IMR-90 (cell line): ENCODE measurements at regions of chr7 and their contacts with region 1.

Region 1: GRCh38 chr7:10802526-10802925 is 171.1 kb upstream of the PHF14 start:
- DNase-seq: peak; percentile 13
- ATAC-seq: no peak
- H3K4me3 ChIP-seq: no peak overlapping the region
- H3K27ac ChIP-seq: no peak overlapping the region
- H3K4me1 ChIP-seq: no peaks in the 10 kb centered on the region
- H3K27me3 ChIP-seq: no peaks in the 10 kb centered on the region
- CTCF ChIP-seq: no peak
- POLR2A ChIP-seq: no peak
- RAD21 ChIP-seq: no peak

Region 2: DNA sequence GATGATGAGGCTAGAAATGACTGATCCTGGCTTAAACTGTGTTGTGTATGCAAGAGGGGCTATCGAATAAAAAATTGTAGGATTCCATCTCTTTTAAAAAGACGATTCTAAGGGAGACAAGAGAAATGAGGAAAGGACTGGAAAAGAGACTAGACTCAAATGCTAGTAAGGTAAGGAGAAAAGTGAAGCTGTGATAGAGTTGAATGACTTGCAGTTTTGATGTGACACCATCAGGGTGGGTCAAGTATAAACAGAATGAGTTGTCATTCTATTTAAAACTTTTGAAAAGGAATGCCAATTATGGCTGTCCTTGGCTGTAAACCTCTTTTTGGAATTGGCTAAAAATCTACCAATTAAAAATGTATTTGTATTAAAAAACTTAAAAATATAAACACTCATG is 13.4 kb before region 1 on chr7:
- CTCF ChIA-PET with region 1: no interaction called
- POLR2A ChIA-PET with region 1: no interaction called
- dilution Hi-C with region 1: no loop called
- in situ Hi-C with region 1: no loop called
- intact Hi-C with region 1: loop called (anchors 1 kb)
- DNase-seq: no peak
- ATAC-seq: no peak
- H3K4me3 ChIP-seq: no peak overlapping the region
- H3K27ac ChIP-seq: no peak overlapping the region
- H3K4me1 ChIP-seq: no peaks in the 10 kb centered on the region
- H3K27me3 ChIP-seq: no peaks in the 10 kb centered on the region
- CTCF ChIP-seq: no peak
- POLR2A ChIP-seq: no peak
- RAD21 ChIP-seq: no peak

Region 3: DNA sequence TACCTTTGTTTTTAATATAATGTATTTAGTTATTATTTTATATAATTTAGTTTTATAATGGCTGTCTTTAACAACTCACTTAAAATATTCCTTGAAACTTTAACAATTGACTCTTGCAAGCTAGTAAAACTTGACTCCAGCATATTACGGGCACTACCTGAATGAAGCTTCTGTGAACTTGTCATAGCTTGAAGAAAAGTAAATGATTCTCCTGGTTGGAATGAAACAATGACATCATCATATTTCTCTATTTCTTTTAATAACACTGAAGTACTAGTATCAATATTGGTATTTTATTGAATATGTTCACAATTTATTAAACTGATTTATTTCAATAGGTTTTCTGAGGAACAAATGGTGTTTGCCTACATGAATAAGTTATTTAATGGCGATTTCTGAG is 42.7 kb after region 1 on chr7:
- CTCF ChIA-PET with region 1: no interaction called
- POLR2A ChIA-PET with region 1: no interaction called
- dilution Hi-C with region 1: no loop called
- in situ Hi-C with region 1: no loop called
- intact Hi-C with region 1: no loop called
- DNase-seq: no peak
- ATAC-seq: no peak
- H3K4me3 ChIP-seq: no peak overlapping the region
- H3K27ac ChIP-seq: no peak overlapping the region
- H3K4me1 ChIP-seq: no peaks in the 10 kb centered on the region
- H3K27me3 ChIP-seq: no peaks in the 10 kb centered on the region
- CTCF ChIP-seq: no peak
- POLR2A ChIP-seq: no peak
- RAD21 ChIP-seq: no peak